ENCODE measurements at regions of chr11 and their contacts with region 1.

Region 1: GRCh38 chr11:74492974-74493790 is at the start of gene LIPT2:
- DNase-seq: peak; percentile 97
- ATAC-seq: peak; percentile 94
- H3K4me3 Mint-ChIP-seq: peak within 1 kb of the TSS; percentile 72
- H3K27ac Mint-ChIP-seq: peak within 1 kb of the TSS; percentile 97
- H3K4me1 Mint-ChIP-seq: peaks cover 20% of the 10 kb centered on the region
- H3K27me3 Mint-ChIP-seq: no peaks in the 10 kb centered on the region; the same call in 1 of the 2 replicates
- CTCF ChIP-seq: no peak
- total RNA-seq, gene LIPT2: 9.3 to 9.6 TPM (median 9.5 TPM) in 3 replicates

Region 2: DNA sequence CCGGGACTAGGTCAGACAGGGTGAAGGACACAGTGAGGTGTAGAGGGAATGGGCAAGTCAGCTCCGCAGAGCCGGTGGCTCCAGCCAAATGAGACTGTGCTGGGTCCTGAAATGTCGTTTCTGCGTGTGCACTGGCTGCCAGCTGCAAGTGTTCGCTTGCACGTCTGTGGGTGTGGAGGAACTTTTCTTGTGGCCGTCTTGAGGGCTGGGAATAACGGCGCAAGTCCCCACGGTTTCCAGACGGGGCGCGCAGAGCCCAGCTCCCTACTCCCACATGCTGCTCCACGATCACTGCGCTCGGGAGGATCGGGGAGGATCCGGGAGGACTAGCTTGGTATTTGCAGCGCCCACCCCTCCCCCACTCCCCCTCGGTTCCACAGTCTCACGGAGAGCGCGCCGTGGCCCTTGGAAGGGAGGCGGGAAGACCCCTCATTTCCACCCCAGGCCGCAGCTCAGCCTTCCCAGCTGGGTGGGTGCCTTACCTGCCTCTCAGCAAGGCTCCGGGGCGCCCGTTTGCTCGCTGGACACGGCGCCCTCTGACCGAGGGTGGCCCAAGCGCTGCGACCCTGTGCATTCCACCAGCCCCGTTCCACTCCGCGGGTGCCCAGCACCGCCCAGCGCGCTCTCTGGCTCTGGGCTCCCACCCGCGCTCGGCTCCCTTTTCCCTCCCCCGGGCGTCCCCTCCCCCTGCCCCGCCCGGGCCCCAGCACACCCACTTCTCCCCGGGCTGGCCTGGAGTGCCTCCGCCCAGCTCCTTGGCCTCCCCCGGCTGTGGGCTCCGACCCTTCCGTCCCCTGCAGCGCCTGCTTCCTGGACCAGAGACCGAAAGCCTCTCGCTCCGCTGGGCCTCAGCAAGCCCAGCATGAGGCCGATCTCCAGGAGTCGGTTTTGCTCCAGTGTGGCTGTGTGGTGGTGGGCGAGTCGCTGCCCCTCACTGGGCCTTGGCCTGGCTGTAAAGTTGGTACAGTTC is 26.0 kb before region 1 on chr11 and contains the start of gene KCNE3:
- CTCF ChIA-PET with region 1: interaction called, 17 read pairs
- POLR2A ChIA-PET with region 1: interaction called, 8 read pairs
- DNase-seq: peak; percentile 52
- ATAC-seq: peak; percentile 79
- H3K4me3 Mint-ChIP-seq: peak within 1 kb of the TSS; percentile 67
- H3K27ac Mint-ChIP-seq: no peak within 1 kb of the TSS
- H3K4me1 Mint-ChIP-seq: peaks cover 21% of the 10 kb centered on the region
- H3K27me3 Mint-ChIP-seq: peaks cover 24% of the 10 kb centered on the region
- CTCF ChIP-seq: no peak
- total RNA-seq, gene KCNE3: 1.9 to 3.7 TPM (median 3.5 TPM) in 3 replicates

Region 3: GRCh38 chr11:74592441-74593362 is 99.5 kb after region 1 on chr11 and contains the start of gene POLD3:
- CTCF ChIA-PET with region 1: interaction called, 5 read pairs
- POLR2A ChIA-PET with region 1: interaction called, 17 read pairs
- DNase-seq: peak; percentile 96
- ATAC-seq: peak; percentile 97
- H3K4me3 Mint-ChIP-seq: peak within 1 kb of the TSS; percentile 95
- H3K27ac Mint-ChIP-seq: peak within 1 kb of the TSS; percentile 92
- H3K4me1 Mint-ChIP-seq: peaks cover 15% of the 10 kb centered on the region
- H3K27me3 Mint-ChIP-seq: no peaks in the 10 kb centered on the region
- CTCF ChIP-seq: no peak
- total RNA-seq, gene POLD3: 21.9 to 24.1 TPM (median 23.4 TPM) in 3 replicates

Region 4: DNA sequence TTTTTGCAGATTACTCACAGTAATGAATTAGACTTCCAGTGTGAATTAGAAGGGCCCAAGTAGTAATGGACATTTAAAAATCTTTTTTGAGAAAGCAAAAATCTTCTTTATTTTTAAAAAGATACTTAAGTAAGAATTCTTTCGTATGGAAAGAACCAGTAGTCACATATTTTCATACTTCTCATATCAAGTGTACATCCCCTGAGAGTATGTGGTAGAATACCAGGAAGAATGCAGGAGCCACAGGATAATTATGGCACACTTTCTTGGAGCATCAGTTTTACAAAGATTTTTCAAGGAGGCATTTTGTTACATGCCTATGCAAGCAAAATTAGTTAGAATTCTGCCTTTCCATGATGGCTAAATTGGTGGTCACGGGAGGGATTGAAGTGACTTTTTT is 127.3 kb after region 1 on chr11:
- CTCF ChIA-PET with region 1: no interaction called
- POLR2A ChIA-PET with region 1: no interaction called
- DNase-seq: no peak
- ATAC-seq: no peak
- H3K4me3 Mint-ChIP-seq: no peak overlapping the region
- H3K27ac Mint-ChIP-seq: no peak overlapping the region
- H3K4me1 Mint-ChIP-seq: 0 out of 2 replicates have a peak, but pooled peaks cover 2% of the 10 kb centered on the region
- H3K27me3 Mint-ChIP-seq: no peaks in the 10 kb centered on the region
- CTCF ChIP-seq: no peak